ENCODE measurements at regions of chr2 and their contacts with region 1.

Region 1: DNA sequence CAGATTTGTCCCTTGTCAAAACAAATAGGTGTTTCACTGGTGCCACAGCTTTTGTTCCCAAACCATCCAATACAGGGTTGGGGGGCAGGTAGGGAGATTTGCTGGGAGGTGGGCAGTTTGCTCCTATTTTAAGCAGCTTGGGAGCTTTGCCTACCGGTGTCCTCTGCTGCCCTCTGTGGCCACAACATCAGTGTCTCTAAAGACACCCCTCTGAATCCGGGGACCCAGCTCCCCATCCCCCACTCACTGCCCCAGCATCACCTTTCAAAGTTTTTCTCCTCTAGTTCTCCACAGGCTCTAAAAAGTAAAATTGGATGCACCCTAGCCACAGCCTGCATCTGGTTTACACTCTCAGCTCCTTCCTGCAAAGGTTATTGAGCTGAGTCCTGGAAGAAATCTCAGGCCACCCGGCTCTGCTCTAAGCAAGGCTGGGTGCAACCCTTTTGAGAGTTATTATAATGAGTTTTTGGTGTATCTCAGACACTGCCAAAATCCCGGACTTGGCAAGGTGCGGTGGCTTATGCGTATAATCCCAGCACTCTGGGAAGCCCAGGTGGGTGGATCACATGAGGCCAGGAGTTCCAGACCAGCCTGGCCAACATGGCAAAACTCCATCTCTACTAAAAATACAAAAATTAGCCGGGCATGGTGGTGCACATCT is 2.9 kb upstream of the EPAS1 start:
- DNase-seq: peak; percentile 55
- H3K27ac ChIP-seq: no peak overlapping the region
- CTCF ChIP-seq: peak; percentile 29

Region 2: GRCh38 chr2:46062637-46063412 is 231.5 kb before region 1 on chr2:
- CTCF ChIA-PET with region 1: interaction called, 13 read pairs
- POLR2A ChIA-PET with region 1: interaction called, 5 read pairs
- DNase-seq: peak; percentile 70
- H3K27ac ChIP-seq: no peak overlapping the region
- CTCF ChIP-seq: peak; percentile 87

Measured in RWPE1 (cell line).